Kidney (tissue), 22 donors: ENCODE measurements at regions of chr7 and their contacts with region 1.

Region 1: GRCh38 chr7:49618028-49618427 is 155.4 kb upstream of the VWC2 start:
- DNase-seq: no peak
- H3K4me3 ChIP-seq: no peak overlapping the region
- H3K27ac ChIP-seq: no peak overlapping the region
- H3K4me1 ChIP-seq: no peaks in the 10 kb centered on the region
- H3K27me3 ChIP-seq: no peaks in the 10 kb centered on the region
- CTCF ChIP-seq: no peak

Region 2: GRCh38 chr7:49060743-49061142 is 557.3 kb before region 1 on chr7:
- intact Hi-C with region 1: no loop called
- DNase-seq: no peak
- H3K4me3 ChIP-seq: no peak overlapping the region
- H3K27ac ChIP-seq: no peak overlapping the region
- H3K4me1 ChIP-seq: no peaks in the 10 kb centered on the region
- H3K27me3 ChIP-seq: no peaks in the 10 kb centered on the region
- CTCF ChIP-seq: no peak

Region 3: GRCh38 chr7:49670991-49671390 is 53.0 kb after region 1 on chr7:
- intact Hi-C with region 1: loop called (anchors 10 kb)
- DNase-seq: no peak
- H3K4me3 ChIP-seq: no peak overlapping the region
- H3K27ac ChIP-seq: no peak overlapping the region
- H3K4me1 ChIP-seq: no peaks in the 10 kb centered on the region
- H3K27me3 ChIP-seq: no peaks in the 10 kb centered on the region
- CTCF ChIP-seq: no peak